Activated CD8-positive, alpha-beta T cell treated with anti-CD3 and anti-CD28 coated beads for 36 hours (primary cell): ENCODE measurements at regions of chr1 and their contacts with region 1.

Region 1: GRCh38 chr1:12177999-12178441 is 11.2 kb downstream of the TNFRSF1B start:
- DNase-seq: peak; percentile 99
- ATAC-seq: peak; percentile 72
- H3K4me3 Mint-ChIP-seq: peak overlapping the region; percentile 67
- H3K27ac Mint-ChIP-seq: peak overlapping the region; percentile 98
- H3K4me1 Mint-ChIP-seq: peaks cover 85% of the 10 kb centered on the region
- H3K27me3 Mint-ChIP-seq: no peaks in the 10 kb centered on the region
- CTCF ChIP-seq: no peak

Region 2: GRCh38 chr1:12161662-12162458 is 16.2 kb before region 1 on chr1:
- CTCF ChIA-PET with region 1: interaction called, 9 read pairs
- POLR2A ChIA-PET with region 1: interaction called, 57 read pairs
- intact Hi-C with region 1: no loop called
- DNase-seq: peak; percentile 93
- ATAC-seq: peak; percentile 78
- H3K4me3 Mint-ChIP-seq: peak overlapping the region; percentile 11
- H3K27ac Mint-ChIP-seq: peak overlapping the region; percentile 95
- H3K4me1 Mint-ChIP-seq: peaks cover 79% of the 10 kb centered on the region
- H3K27me3 Mint-ChIP-seq: no peaks in the 10 kb centered on the region
- CTCF ChIP-seq: no peak

Region 3: DNA sequence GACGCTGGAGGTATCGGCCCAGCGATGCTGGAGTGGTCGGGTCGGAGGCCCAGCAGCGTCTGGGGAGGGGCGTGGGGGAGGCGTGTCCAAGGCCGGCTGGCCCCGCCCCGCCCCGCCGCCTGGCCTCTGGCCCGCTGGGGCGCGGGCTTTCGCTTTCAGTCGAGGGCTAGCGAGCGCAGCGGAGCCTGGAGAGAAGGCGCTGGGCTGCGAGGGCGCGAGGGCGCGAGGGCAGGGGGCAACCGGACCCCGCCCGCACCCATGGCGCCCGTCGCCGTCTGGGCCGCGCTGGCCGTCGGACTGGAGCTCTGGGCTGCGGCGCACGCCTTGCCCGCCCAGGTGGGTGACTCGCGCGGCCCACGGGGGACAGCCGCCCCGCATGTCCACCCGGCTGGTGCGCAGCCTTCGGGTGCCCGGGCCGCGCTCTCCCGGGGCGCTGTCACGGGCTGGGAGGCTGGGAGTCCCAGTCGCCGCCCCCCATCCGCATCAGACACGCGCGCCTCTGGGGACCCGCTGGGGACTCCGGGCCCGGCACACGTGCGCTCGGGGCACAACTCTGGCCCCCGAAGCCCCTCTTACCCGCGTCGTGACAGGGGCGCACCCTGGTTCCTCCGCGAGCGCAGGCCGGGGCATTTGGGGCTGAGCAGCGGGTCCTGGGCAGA is 11.1 kb before region 1 on chr1 and contains the start of gene TNFRSF1B:
- CTCF ChIA-PET with region 1: interaction called, 10 read pairs
- POLR2A ChIA-PET with region 1: interaction called, 57 read pairs
- intact Hi-C with region 1: no loop called
- DNase-seq: peak; percentile 75
- ATAC-seq: peak; percentile 60
- H3K4me3 Mint-ChIP-seq: peak within 1 kb of the TSS; percentile 92
- H3K27ac Mint-ChIP-seq: peak within 1 kb of the TSS; percentile 99
- H3K4me1 Mint-ChIP-seq: peaks cover 64% of the 10 kb centered on the region
- H3K27me3 Mint-ChIP-seq: no peaks in the 10 kb centered on the region
- CTCF ChIP-seq: no peak
- total RNA-seq, gene TNFRSF1B: 173 to 191 TPM

Region 4: GRCh38 chr1:12208764-12209494 is 30.9 kb after region 1 on chr1:
- CTCF ChIA-PET with region 1: interaction called, 5 read pairs
- POLR2A ChIA-PET with region 1: interaction called, 47 read pairs
- intact Hi-C with region 1: no loop called
- DNase-seq: peak; percentile 92
- ATAC-seq: peak; percentile 61
- H3K4me3 Mint-ChIP-seq: no peak overlapping the region
- H3K27ac Mint-ChIP-seq: peak overlapping the region; percentile 43
- H3K4me1 Mint-ChIP-seq: peaks cover 53% of the 10 kb centered on the region
- H3K27me3 Mint-ChIP-seq: no peaks in the 10 kb centered on the region
- CTCF ChIP-seq: peak; percentile 95

Region 5: GRCh38 chr1:12249181-12249580 is 71.2 kb after region 1 on chr1:
- CTCF ChIA-PET with region 1: no interaction called
- POLR2A ChIA-PET with region 1: no interaction called
- intact Hi-C with region 1: no loop called
- DNase-seq: no peak
- ATAC-seq: no peak
- H3K4me3 Mint-ChIP-seq: no peak overlapping the region
- H3K27ac Mint-ChIP-seq: no peak overlapping the region
- H3K4me1 Mint-ChIP-seq: no peaks in the 10 kb centered on the region
- H3K27me3 Mint-ChIP-seq: no peaks in the 10 kb centered on the region
- CTCF ChIP-seq: no peak

Region 6: GRCh38 chr1:12397462-12398450 is 219.7 kb after region 1 on chr1:
- CTCF ChIA-PET with region 1: no interaction called
- POLR2A ChIA-PET with region 1: no interaction called
- intact Hi-C with region 1: no loop called
- DNase-seq: no peak
- ATAC-seq: no peak
- H3K4me3 Mint-ChIP-seq: no peak overlapping the region
- H3K27ac Mint-ChIP-seq: peak overlapping the region; percentile 2
- H3K4me1 Mint-ChIP-seq: peaks cover 15% of the 10 kb centered on the region
- H3K27me3 Mint-ChIP-seq: no peaks in the 10 kb centered on the region
- CTCF ChIP-seq: no peak